SK-N-SH (cell line): ENCODE measurements at regions of chr7 and their contacts with region 1.

Region 1: DNA sequence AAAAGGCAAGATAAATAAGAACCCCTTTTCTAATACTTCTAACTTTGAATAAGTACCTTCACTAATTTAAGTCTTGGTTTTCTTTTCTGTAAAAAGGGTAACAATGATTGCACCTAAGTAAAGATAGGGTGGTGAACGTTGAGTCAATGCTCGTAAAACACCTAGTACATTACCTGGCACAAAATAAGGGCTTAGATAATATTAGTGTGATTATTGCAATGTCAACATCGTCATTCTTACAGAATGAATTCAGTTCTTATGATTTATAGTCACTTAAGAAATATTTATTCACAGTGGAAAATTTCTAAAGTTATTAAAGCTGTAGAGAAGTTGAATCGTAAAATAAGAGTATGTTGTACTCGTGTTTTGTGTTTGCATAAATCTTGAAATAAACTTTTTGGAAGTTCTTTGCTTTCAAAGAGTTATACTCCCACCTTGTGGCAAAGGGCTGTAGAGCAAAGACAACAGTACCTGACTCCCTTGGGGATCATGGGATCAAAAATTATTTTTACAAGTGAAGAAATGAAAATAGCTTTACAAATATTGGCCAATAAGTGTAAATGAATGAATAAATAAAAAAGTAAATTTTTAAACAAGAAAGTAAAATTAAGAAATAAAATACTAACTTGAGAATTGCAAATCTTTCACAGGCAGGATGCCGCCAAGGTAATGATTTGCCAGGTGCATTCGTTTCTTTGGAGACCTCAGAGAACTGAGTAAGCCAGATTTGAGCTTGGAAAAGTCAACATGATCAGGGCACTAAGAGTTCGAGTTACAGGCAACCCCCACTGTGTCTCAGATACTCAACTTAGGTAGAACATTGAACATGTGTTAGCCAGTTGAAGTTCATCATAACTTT is 285.8 kb upstream of the CACNA2D1 start:
- DNase-seq: peak; percentile 52
- H3K4me3 ChIP-seq: no peak overlapping the region; a peak in 1 of 4 replicates
- H3K27ac ChIP-seq: no peak overlapping the region
- H3K4me1 ChIP-seq: peaks cover 0 to 3% of the 10 kb centered on the region in 2 experiments; a peak in 1 of 4 replicates
- H3K27me3 ChIP-seq: no peaks in the 10 kb centered on the region
- CTCF ChIP-seq: peak; percentile 99
- EP300 ChIP-seq: no peak
- RAD21 ChIP-seq: peak; percentile 93

Region 2: GRCh38 chr7:81482600-81483186 is 1246.7 kb before region 1 on chr7:
- CTCF ChIA-PET with region 1: interaction called, 19 read pairs
- POLR2A ChIA-PET with region 1: no interaction called
- DNase-seq: peak; percentile 35
- H3K4me3 ChIP-seq: no peak overlapping the region
- H3K27ac ChIP-seq: no peak overlapping the region
- H3K4me1 ChIP-seq: peaks cover 0 to 3% of the 10 kb centered on the region in 2 experiments; a peak in 2 of 4 replicates
- H3K27me3 ChIP-seq: no peaks in the 10 kb centered on the region
- CTCF ChIP-seq: peak; percentile 80
- EP300 ChIP-seq: no peak
- RAD21 ChIP-seq: peak; percentile 84

Region 3: DNA sequence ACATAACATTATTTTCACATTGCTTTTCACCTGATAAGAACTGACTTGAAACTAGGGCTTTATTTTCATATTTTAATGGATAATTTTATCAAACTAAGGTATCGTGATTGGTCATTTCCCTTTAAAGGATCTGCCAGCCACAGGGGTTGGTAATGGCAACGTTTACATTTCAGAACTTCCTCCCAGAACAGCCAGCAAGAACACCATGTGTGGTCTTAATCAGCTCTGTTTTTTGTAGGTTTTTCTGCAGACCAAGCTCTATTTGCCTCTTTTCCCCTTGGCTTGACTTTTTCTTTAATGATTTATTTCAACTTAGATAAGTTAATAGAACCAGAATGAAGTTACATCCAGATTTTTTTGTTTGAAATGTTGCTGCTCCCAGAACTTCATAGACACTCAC is 23.5 kb before region 1 on chr7:
- CTCF ChIA-PET with region 1: interaction called, 10 read pairs
- POLR2A ChIA-PET with region 1: no interaction called
- DNase-seq: no peak
- H3K4me3 ChIP-seq: no peak overlapping the region
- H3K27ac ChIP-seq: no peak overlapping the region
- H3K4me1 ChIP-seq: peaks cover 0 to 33% of the 10 kb centered on the region in 2 experiments; a peak in 2 of 4 replicates
- H3K27me3 ChIP-seq: no peaks in the 10 kb centered on the region
- CTCF ChIP-seq: no peak
- EP300 ChIP-seq: no peak
- RAD21 ChIP-seq: no peak

Region 4: DNA sequence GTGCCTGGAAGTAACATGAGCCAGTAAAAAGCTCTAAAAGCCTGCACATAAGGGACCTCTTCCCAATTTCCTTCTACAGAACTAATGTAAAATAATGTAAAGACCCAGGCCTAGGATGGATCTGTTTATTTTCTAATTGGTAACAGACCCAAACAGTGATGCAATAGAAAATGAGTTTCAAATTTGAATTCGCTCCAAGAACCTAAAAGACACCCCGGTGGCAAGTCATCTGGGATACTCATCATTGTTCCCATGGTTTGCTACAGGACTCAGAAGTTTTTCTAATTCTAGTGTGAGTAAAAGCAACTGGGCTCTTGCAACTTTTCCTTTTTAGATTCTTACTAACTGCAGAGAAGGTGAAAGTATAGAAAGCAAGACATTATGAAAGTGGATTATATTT is 14.5 kb before region 1 on chr7:
- CTCF ChIA-PET with region 1: interaction called, 12 read pairs
- POLR2A ChIA-PET with region 1: no interaction called
- DNase-seq: no peak
- H3K4me3 ChIP-seq: no peak overlapping the region
- H3K27ac ChIP-seq: peak overlapping the region in 1 of 2 experiments; percentile 61; a peak in 1 of 4 replicates
- H3K4me1 ChIP-seq: peaks cover 0 to 4% of the 10 kb centered on the region in 2 experiments; a peak in 1 of 4 replicates
- H3K27me3 ChIP-seq: no peaks in the 10 kb centered on the region
- CTCF ChIP-seq: no peak
- EP300 ChIP-seq: no peak
- RAD21 ChIP-seq: no peak

Region 5: DNA sequence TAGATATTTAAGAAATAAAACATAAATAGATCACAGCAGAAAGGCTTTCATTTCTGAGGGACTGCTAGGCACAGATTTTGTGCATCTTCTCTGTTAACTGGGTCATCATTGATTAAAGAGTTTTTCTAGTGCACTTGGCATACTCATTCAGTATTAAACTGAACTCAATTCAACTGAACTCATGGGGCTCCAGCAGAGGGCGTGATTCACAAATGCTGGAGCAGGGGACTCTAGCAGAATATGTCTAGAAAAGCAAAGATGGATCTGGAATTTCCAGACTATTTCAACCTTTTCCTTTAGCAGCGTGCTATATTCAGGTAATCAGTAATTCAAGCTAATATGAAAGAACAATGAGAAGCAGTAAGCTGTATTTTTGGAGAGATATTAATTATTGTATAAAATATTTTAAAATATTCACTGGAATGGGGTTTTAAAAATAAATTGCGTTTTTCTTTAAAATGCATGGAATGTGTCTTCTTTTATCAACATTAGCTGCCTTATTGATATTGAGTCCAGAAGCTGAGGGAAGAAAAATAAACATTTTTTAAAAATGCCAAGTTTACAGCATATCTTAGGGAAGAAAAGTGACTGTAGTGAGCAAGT is 10.9 kb after region 1 on chr7:
- CTCF ChIA-PET with region 1: interaction called, 53 read pairs
- POLR2A ChIA-PET with region 1: no interaction called
- DNase-seq: peak; percentile 48
- H3K4me3 ChIP-seq: no peak overlapping the region; a peak in 1 of 4 replicates
- H3K27ac ChIP-seq: no peak overlapping the region
- H3K4me1 ChIP-seq: 0 out of 4 replicates have a peak, but pooled peaks cover 0 to 8% of the 10 kb centered on the region in 2 experiments
- H3K27me3 ChIP-seq: no peaks in the 10 kb centered on the region
- CTCF ChIP-seq: peak; percentile 93
- EP300 ChIP-seq: no peak
- RAD21 ChIP-seq: peak; percentile 91

Region 6: GRCh38 chr7:82851121-82851520 is 121.7 kb after region 1 on chr7:
- CTCF ChIA-PET with region 1: no interaction called
- POLR2A ChIA-PET with region 1: no interaction called
- DNase-seq: no peak
- H3K4me3 ChIP-seq: no peak overlapping the region
- H3K27ac ChIP-seq: no peak overlapping the region
- H3K4me1 ChIP-seq: no peaks in the 10 kb centered on the region; a peak in 1 of 4 replicates
- H3K27me3 ChIP-seq: no peaks in the 10 kb centered on the region
- CTCF ChIP-seq: no peak
- EP300 ChIP-seq: no peak
- RAD21 ChIP-seq: no peak